ENCODE measurements at regions of chr1 and their contacts with region 1.

Region 1: DNA sequence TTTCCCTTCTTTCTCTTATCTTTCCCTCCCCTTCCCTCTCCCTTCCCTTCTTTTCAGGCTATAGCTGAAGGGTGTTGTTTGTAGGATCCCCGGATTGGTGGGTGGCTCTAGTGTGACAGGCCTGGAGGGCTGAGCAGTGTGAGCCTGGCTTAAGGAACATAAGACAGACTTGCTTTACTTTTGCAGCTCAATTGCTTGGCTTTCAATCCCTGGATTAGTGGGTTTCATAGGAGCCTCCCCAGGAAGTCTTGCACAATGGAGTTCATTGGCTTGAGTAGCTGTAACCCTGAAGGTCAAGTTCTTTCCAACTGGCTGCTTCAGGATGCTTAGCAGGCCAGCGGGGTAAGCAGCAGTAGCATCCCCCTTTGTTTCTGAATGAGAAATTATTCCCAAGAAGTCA is 126.7 kb downstream of the CAMTA1 start:
- DNase-seq: no peak
- H3K4me3 ChIP-seq: no peak overlapping the region
- H3K27ac ChIP-seq: no peak overlapping the region
- H3K4me1 ChIP-seq: peaks cover 0 to 9% of the 10 kb centered on the region in 2 donors
- H3K27me3 ChIP-seq: no peaks in the 10 kb centered on the region
- CTCF ChIP-seq: no peak
- POLR2A ChIP-seq: no peak

Region 2: GRCh38 chr1:6880951-6881690 is 30.9 kb before region 1 on chr1:
- intact Hi-C with region 1: loop called (anchors 1 kb)
- DNase-seq: peak in 1 of 2 donors; percentile 86
- H3K4me3 ChIP-seq: no peak overlapping the region
- H3K27ac ChIP-seq: peak overlapping the region; percentile 43 to 71
- H3K4me1 ChIP-seq: no peaks in the 10 kb centered on the region
- H3K27me3 ChIP-seq: no peaks in the 10 kb centered on the region
- CTCF ChIP-seq: no peak
- POLR2A ChIP-seq: no peak

Measured in breast epithelium (tissue), 4 donors.